ENCODE measurements at regions of chr2 and their contacts with region 1.

Region 1: GRCh38 chr2:111128096-111128495 is 7.4 kb downstream of the BCL2L11 start:
- DNase-seq: no peak
- ATAC-seq: no peak
- H3K4me3 Mint-ChIP-seq: no peak overlapping the region
- H3K27ac Mint-ChIP-seq: no peak overlapping the region
- H3K4me1 Mint-ChIP-seq: peaks cover 64% of the 10 kb centered on the region
- H3K27me3 Mint-ChIP-seq: no peaks in the 10 kb centered on the region
- CTCF ChIP-seq: no peak

Region 2: GRCh38 chr2:111143107-111143842 is 15.2 kb after region 1 on chr2:
- CTCF ChIA-PET with region 1: no interaction called
- POLR2A ChIA-PET with region 1: interaction called, 24 read pairs
- intact Hi-C with region 1: loop called (anchors 2 kb)
- DNase-seq: no peak
- ATAC-seq: no peak
- H3K4me3 Mint-ChIP-seq: no peak overlapping the region
- H3K27ac Mint-ChIP-seq: no peak overlapping the region
- H3K4me1 Mint-ChIP-seq: peaks cover 11% of the 10 kb centered on the region
- H3K27me3 Mint-ChIP-seq: no peaks in the 10 kb centered on the region
- CTCF ChIP-seq: no peak